ENCODE measurements at regions of chr7 and their contacts with region 1.

Region 1: GRCh38 chr7:41328544-41328943 is 374.3 kb downstream of the INHBA start:
- DNase-seq: no peak
- H3K4me3 ChIP-seq: no peak overlapping the region
- H3K27ac ChIP-seq: no peak overlapping the region
- H3K4me1 ChIP-seq: no peaks in the 10 kb centered on the region
- H3K27me3 ChIP-seq: no peaks in the 10 kb centered on the region
- CTCF ChIP-seq: no peak
- POLR2A ChIP-seq: no peak

Region 2: DNA sequence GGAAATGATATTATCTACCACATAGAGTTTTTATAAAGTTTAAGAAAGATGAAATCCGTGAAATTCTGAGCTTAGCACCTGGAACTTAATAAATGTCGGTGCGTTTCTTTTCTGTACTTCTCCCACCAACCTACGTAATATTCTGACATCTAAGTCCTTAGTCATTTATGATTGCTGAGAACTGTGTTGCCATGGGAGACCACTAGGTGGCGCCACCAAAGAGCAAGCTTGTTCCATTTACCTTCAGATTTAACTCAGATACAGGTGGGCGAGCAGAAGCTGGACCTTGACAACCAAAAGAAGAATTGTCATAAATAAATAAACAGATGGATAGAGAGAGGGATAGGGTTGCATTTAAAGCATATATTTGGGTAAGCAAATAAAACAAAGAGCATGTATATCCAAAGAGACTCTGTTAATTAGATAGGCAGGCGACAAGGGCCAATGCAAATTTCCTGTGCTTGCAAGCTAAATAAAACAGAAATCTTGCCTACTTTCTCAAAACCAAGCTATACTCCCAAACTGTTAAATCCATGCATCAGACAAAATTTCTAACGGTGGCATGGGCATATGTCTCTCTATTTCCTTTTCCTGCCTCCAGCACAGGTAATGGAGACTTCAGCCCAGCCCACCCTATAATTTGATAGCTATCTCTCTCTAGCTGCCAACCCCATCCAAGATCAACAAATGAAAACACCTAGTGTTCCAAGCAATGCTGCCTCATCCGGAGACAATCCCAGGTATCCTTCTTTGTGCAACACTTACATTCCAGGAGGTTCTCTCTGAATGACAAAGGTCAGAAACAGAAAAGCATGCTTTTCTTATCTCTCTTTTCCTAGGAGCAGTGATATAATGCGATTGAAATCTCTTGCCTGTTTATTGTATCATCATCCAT is 325.3 kb before region 1 on chr7:
- CTCF ChIA-PET with region 1: interaction called, 3 read pairs
- POLR2A ChIA-PET with region 1: no interaction called
- dilution Hi-C with region 1: no loop called
- intact Hi-C with region 1: loop called (anchors 10 kb)
- DNase-seq: peak; percentile 80
- H3K4me3 ChIP-seq: no peak overlapping the region
- H3K27ac ChIP-seq: no peak overlapping the region
- H3K4me1 ChIP-seq: no peaks in the 10 kb centered on the region
- H3K27me3 ChIP-seq: no peaks in the 10 kb centered on the region
- CTCF ChIP-seq: peak; percentile 73 to 77
- POLR2A ChIP-seq: no peak

Region 3: DNA sequence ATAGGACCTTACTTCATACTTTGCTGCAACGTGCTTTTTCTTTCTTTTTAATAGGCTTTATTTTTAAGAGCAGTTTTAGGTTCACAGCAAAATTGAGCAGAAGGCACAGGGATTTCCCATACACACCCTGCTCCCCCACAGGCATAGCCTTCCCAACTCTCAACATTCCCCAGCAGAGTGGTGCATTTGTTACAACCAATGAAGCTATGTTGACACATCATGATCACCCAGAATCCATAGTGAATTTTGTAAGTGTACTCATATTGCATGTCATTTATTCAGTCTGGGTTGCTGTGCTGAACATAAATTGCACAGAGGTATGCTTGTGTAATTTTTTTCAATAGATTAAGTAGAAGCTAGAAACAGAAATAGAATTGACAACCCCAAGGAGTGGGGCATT is 47.0 kb after region 1 on chr7:
- CTCF ChIA-PET with region 1: no interaction called
- POLR2A ChIA-PET with region 1: no interaction called
- dilution Hi-C with region 1: no loop called
- intact Hi-C with region 1: loop called (anchors 5 kb)
- DNase-seq: no peak
- H3K4me3 ChIP-seq: no peak overlapping the region
- H3K27ac ChIP-seq: no peak overlapping the region
- H3K4me1 ChIP-seq: no peaks in the 10 kb centered on the region
- H3K27me3 ChIP-seq: no peaks in the 10 kb centered on the region
- CTCF ChIP-seq: no peak
- POLR2A ChIP-seq: no peak